Left lung (tissue), 14 donors: ENCODE measurements at regions of chr9 and their contacts with region 1.

Region 1: GRCh38 chr9:127199001-127199791 is 65.4 kb upstream of the GARNL3 start:
- DNase-seq: peak in 3 of 4 donors; percentile 54 to 88 (median 79)
- ATAC-seq: peak; percentile 93
- H3K4me3 ChIP-seq: no peak overlapping the region
- H3K27ac ChIP-seq: no peak overlapping the region
- H3K4me1 ChIP-seq: peaks cover 0 to 7% of the 10 kb centered on the region in 2 donors
- H3K27me3 ChIP-seq: no peaks in the 10 kb centered on the region
- CTCF ChIP-seq: peak; percentile 77 to 81

Region 2: GRCh38 chr9:126965541-126966428 is 233.4 kb before region 1 on chr9:
- intact Hi-C with region 1: loop called in 1 of 2 experiments (anchors 10 kb)
- DNase-seq: peak in 2 of 4 donors; percentile 45 to 68
- ATAC-seq: peak; percentile 67
- H3K4me3 ChIP-seq: no peak overlapping the region
- H3K27ac ChIP-seq: peak overlapping the region; percentile 7 to 82
- H3K4me1 ChIP-seq: peaks cover 11% of the 10 kb centered on the region in 2 donors
- H3K27me3 ChIP-seq: no peaks in the 10 kb centered on the region
- CTCF ChIP-seq: peak; percentile 59 to 62

Region 3: GRCh38 chr9:127489471-127490115 is 290.4 kb after region 1 on chr9:
- intact Hi-C with region 1: no loop called
- DNase-seq: no peak
- ATAC-seq: no peak
- H3K4me3 ChIP-seq: no peak overlapping the region
- H3K27ac ChIP-seq: no peak overlapping the region
- H3K4me1 ChIP-seq: no peaks in the 10 kb centered on the region
- H3K27me3 ChIP-seq: no peaks in the 10 kb centered on the region
- CTCF ChIP-seq: no peak